Esophagus muscularis mucosa (tissue), 4 donors: ENCODE measurements at regions of chr2 and their contacts with region 1.

Region 1: DNA sequence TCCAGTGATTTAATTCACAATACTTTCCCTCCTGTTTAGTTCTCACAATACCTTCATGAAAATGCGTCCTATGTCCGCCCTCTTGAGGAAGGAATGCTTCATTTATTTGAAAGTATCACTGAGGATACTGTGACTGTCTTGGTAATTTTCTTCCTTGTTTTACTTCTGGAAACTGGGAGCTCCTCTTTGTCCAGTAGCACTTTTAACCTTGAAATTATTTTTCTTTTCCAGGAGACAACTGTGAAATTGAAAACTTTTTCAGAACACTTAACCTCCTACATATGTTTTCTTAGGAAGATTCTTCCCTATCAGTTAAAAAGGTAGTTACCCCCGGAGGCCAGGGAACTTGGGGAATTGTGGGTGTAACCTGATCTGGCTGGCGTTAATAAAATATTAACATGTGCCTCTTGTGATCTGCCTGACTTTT is 58.9 kb upstream of the STON1 start:
- DNase-seq: no peak
- H3K4me3 ChIP-seq: no peak overlapping the region
- H3K27ac ChIP-seq: peak overlapping the region; percentile 86 to 89 (median 88)
- H3K4me1 ChIP-seq: peaks cover 17 to 42% (median 39%) of the 10 kb centered on the region in 4 donors
- H3K27me3 ChIP-seq: no peaks in the 10 kb centered on the region
- CTCF ChIP-seq: peak; percentile 65 to 72 (median 71)
- EP300 ChIP-seq: no peak
- POLR2A ChIP-seq: no peak

Region 2: GRCh38 chr2:48530033-48530804 is 59.2 kb after region 1 on chr2 and contains the start of gene STON1:
- intact Hi-C with region 1: loop called (anchors 5 kb)
- DNase-seq: no peak
- H3K4me3 ChIP-seq: peak within 1 kb of the TSS; percentile 90 to 99 (median 94)
- H3K27ac ChIP-seq: peak within 1 kb of the TSS; percentile 98 to 99 (median 98)
- H3K4me1 ChIP-seq: peaks cover 23 to 85% (median 82%) of the 10 kb centered on the region in 4 donors
- H3K27me3 ChIP-seq: no peaks in the 10 kb centered on the region
- CTCF ChIP-seq: peak in 1 of 3 experiments; percentile 24
- EP300 ChIP-seq: no peak
- POLR2A ChIP-seq: no peak
- total RNA-seq, gene STON1: 135 to 198 (median 168) TPM

Region 3: DNA sequence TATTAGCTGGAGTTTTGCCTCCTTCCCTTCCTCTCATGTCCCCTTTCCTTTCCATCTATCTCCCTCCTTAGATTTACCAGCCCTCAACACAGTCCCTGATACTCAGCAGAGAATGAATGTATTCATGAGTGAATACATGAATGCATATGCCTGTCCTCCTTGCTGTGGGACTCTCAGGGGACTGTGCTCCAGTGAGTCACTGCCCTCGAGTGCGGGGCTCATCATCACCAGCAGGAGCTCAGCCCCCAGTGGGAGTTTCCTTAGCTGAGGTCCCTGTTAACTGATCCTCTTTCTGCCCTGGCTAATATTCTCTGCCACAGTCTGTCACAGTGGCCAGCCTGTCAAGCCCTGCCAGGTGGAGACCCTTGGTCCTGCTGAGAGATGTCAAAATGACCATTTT is 389.3 kb after region 1 on chr2:
- intact Hi-C with region 1: no loop called
- DNase-seq: no peak
- H3K4me3 ChIP-seq: no peak overlapping the region
- H3K27ac ChIP-seq: no peak overlapping the region
- H3K4me1 ChIP-seq: peaks cover 0 to 16% (median 14%) of the 10 kb centered on the region in 4 donors
- H3K27me3 ChIP-seq: no peaks in the 10 kb centered on the region
- CTCF ChIP-seq: no peak
- EP300 ChIP-seq: no peak
- POLR2A ChIP-seq: no peak